ENCODE measurements at regions of chr7 and their contacts with region 1.

Region 1: DNA sequence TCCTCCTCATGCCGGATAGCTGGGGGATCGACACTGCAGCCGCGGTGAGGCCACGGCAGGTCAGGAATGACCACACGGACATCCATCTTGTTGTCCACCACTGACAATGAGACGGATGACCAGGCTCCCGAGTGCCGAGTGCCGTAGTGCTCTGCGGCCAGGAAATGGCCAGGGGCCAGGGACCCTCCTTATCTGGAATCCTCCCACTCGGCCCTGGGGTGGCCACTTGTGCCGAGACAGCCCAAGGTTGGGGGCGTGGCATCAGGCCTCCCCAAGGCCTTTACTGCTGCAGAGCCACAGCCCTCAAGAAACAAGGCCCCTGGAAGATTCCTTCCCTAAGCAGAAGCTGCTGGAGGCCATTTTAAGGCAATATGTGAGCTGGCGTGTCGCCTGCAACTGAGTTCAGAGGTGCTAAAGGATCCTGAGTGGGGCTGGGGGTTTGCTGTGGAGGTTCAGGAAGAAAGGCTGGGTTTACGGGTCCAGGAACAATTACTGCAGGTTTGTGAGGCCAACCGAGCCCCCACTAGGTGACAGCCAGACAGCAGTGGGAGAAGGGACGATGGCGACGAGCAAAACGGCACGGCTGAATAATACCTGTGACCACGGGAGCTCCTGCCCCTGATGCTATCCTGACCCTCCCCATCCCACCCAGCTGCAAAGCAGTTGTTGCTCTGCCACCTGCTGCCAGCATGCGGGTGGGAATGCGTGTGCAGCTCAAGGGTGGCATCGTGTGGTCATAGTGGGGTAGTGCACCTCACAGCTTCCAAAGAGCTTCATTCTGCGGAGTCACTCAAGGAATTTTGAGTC is 31.6 kb upstream of the LEP start:
- DNase-seq: peak; percentile 86

Region 2: DNA sequence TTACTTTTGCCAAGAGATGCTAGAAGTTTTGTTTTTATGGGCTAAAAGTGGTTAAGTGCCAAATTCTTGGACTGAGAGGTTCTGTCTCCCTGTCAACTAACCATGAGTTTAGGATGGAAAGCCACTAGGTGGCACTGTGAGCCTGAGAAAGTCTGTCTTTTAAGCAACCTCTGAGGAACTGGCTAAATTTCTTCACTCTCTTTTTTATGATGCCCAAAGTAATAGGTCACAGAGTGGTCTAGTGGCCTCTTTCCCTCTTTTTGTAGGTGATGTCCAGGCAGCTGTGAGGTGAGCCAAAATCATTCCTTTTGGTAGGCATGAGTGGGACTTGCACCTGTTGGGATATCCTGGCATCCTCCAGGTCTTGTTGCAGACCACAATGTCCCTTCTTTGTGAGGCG is 500.6 kb before region 1 on chr7:
- CTCF ChIA-PET with region 1: interaction called, 29 read pairs
- POLR2A ChIA-PET with region 1: no interaction called
- DNase-seq: peak; percentile 52

Region 3: DNA sequence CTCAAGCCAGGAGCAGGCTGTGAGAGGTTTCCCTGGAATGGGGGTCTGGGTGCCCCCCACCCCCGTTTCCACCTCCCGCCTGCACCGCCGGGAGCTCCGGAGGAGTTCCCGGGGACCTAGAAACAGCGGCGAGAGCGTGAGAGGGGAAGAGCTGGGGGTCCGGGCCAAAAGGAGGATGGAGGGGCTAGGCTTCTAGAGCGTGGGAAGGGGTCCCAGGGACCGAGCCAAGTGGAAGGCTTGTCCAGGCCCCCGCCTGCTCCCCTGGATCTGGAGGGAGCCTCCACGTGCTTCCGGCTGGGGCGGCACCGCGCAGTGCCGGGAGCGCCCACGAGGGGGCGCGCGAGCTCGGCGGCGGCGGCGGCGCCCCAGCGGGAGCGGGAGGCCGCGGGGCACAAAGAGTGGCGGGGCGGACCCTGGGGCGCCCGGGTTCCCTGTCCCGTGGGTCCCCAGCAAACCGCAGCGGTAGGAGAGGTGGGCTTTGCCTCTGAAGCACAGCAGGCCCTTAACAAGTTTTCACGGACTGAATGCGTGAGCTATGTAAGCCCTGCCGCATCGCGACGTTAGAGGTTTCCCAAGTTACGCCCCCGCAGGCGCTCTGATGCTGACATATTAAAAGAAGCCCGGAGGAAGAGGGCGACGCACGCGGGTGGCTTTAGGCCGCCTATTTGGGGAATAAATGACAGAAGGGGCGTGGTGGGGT is 73.8 kb before region 1 on chr7:
- CTCF ChIA-PET with region 1: interaction called, 45 read pairs
- POLR2A ChIA-PET with region 1: interaction called, 4 read pairs
- DNase-seq: peak; percentile 84

Region 4: GRCh38 chr7:128148676-128149075 is 60.8 kb before region 1 on chr7:
- CTCF ChIA-PET with region 1: no interaction called
- POLR2A ChIA-PET with region 1: no interaction called
- DNase-seq: no peak

Measured in HEK293T (cell line).